ENCODE measurements at regions of chr1 and their contacts with region 1.

Region 1: DNA sequence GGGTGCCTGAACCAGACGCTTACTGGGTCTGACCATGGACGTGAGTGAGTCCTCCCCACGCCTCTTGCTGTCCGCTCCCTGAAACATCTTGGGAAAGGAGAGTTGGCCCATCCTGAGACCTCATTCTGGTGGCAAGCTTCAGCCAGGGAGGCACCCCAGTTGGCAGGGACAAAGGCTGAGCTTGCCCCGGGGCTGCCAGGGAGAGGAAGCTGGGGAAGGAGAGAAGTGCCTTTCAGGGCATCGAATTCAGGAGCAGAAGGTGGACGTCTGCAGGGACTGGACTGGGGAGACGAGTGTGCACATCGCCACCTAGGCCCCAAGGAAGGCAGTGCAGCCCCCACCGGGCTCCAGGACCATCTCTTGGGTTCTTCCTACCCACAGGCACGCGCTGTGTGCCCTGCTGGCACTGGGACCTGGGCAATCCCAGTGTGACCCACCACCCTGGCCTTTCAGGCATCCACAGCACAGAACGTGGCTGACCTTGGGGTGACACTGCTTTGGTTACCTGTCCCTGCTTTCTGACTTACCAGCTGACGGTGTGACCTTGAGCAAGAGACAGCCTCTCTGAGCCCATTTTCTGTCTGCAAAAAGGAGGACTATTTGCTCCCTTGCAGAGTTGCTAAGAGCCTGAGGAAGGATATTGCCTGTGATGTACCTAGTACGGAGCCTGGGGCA is 133.0 kb upstream of the WNT4 start:
- DNase-seq: peak; percentile 67
- ATAC-seq: peak; percentile 89
- H3K4me3 ChIP-seq: no peak overlapping the region
- H3K27ac ChIP-seq: peak overlapping the region; percentile 73
- H3K4me1 ChIP-seq: peaks cover 34% of the 10 kb centered on the region
- H3K27me3 ChIP-seq: no peaks in the 10 kb centered on the region
- CTCF ChIP-seq: peak; percentile 79

Region 2: DNA sequence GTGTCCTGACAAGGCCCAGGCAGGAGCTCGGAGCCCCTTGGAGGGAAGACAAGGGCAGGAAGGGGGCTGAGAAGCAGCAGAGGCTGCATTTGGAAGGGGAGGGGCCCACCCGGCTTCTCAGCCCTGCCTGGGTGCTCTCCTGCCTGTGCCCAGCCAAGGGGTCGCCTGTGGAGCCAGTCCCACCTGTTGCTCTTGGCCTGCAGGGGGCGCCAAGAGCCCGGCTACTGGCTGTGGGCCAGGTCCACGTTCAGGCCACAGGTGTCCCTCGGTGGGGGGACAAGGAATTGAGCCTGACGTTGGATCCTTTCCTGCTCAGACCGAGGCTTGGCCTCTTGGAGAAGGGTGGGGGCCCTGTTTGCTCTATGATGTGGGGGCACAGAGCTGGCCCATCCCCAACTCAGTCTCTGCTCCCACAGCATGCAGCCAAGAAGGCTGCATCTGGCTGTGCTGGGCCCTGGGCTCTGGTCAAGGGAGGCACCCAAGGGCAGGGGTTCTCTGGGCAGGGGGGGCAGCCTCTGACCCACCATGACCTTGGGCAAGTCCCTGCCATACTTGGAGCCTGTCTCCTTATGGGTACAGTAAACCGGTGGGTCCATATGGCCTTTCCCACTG is 143.9 kb before region 1 on chr1:
- CTCF ChIA-PET with region 1: no interaction called
- POLR2A ChIA-PET with region 1: no interaction called
- intact Hi-C with region 1: loop called (anchors 1 kb)
- DNase-seq: peak; percentile 63
- ATAC-seq: peak; percentile 68
- H3K4me3 ChIP-seq: no peak overlapping the region
- H3K27ac ChIP-seq: no peak overlapping the region
- H3K4me1 ChIP-seq: peaks cover 20% of the 10 kb centered on the region
- H3K27me3 ChIP-seq: no peaks in the 10 kb centered on the region
- CTCF ChIP-seq: peak; percentile 93

Region 3: GRCh38 chr1:22184892-22185612 is 90.8 kb before region 1 on chr1:
- CTCF ChIA-PET with region 1: interaction called, 15 read pairs
- POLR2A ChIA-PET with region 1: no interaction called
- intact Hi-C with region 1: no loop called
- DNase-seq: no peak
- ATAC-seq: no peak
- H3K4me3 ChIP-seq: no peak overlapping the region
- H3K27ac ChIP-seq: no peak overlapping the region
- H3K4me1 ChIP-seq: no peaks in the 10 kb centered on the region
- H3K27me3 ChIP-seq: peaks cover 8% of the 10 kb centered on the region; the same call in 1 of the 2 replicates
- CTCF ChIP-seq: no peak

Region 4: GRCh38 chr1:22208235-22208972 is 67.5 kb before region 1 on chr1:
- CTCF ChIA-PET with region 1: no interaction called
- POLR2A ChIA-PET with region 1: no interaction called
- intact Hi-C with region 1: no loop called
- DNase-seq: peak; percentile 30
- ATAC-seq: no peak
- H3K4me3 ChIP-seq: no peak overlapping the region
- H3K27ac ChIP-seq: no peak overlapping the region
- H3K4me1 ChIP-seq: peaks cover 3% of the 10 kb centered on the region; the same call in 1 of the 2 replicates
- H3K27me3 ChIP-seq: peaks cover 14% of the 10 kb centered on the region; the same call in 1 of the 2 replicates
- CTCF ChIP-seq: peak; percentile 75

Region 5: GRCh38 chr1:22229374-22229773 is 46.5 kb before region 1 on chr1:
- CTCF ChIA-PET with region 1: no interaction called
- POLR2A ChIA-PET with region 1: interaction called, 5 read pairs
- intact Hi-C with region 1: loop called (anchors 1 kb)
- DNase-seq: peak; percentile 87
- ATAC-seq: peak; percentile 61
- H3K4me3 ChIP-seq: no peak overlapping the region
- H3K27ac ChIP-seq: peak overlapping the region; percentile 97
- H3K4me1 ChIP-seq: peaks cover 27% of the 10 kb centered on the region
- H3K27me3 ChIP-seq: no peaks in the 10 kb centered on the region
- CTCF ChIP-seq: no peak

Region 6: GRCh38 chr1:22259551-22260282 is 16.1 kb before region 1 on chr1:
- CTCF ChIA-PET with region 1: no interaction called
- POLR2A ChIA-PET with region 1: no interaction called
- intact Hi-C with region 1: no loop called
- DNase-seq: peak; percentile 83
- ATAC-seq: peak; percentile 81
- H3K4me3 ChIP-seq: peak overlapping the region; percentile 8; the same call in 1 of the 2 replicates
- H3K27ac ChIP-seq: peak overlapping the region; percentile 74
- H3K4me1 ChIP-seq: peaks cover 38% of the 10 kb centered on the region
- H3K27me3 ChIP-seq: no peaks in the 10 kb centered on the region
- CTCF ChIP-seq: no peak

Region 7: DNA sequence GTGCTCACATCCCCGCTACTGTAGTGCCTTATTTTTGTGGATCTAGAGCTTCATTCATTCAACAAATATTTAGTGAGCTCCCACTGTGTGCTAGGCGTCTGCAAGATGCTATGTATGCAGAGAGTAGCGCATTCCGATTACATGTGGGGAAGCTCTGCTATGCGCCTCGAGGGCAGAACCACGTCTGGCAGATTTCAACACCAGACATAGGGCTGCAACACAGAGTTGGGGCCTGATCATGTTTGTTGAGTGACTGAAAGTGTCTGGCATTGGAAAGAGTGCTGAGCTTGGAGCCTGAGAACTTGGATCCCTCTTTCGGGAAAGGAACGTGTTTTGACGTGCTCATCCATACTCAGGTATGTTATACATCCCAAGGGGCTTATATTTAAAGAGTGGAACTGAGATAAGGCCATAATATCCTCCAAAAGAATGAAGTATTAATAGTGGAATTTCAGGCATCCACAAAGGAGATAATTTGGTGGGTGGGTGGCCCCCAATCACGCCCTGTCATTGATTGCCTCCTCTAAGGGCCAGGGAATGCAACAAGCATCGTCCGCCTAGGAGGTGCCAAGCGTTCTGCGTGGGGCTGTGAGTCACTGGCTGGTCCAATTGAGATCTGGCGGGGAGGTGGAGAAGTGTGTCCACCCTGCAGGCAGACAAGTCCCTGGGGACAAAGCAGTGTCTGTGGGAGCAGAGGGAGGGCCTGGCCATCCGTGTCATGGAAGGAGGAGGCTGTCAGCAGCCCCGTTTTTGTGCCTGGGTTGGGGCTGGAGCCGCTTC is 113.0 kb after region 1 on chr1:
- CTCF ChIA-PET with region 1: no interaction called
- POLR2A ChIA-PET with region 1: no interaction called
- intact Hi-C with region 1: no loop called
- DNase-seq: peak; percentile 22
- ATAC-seq: no peak
- H3K4me3 ChIP-seq: no peak overlapping the region
- H3K27ac ChIP-seq: no peak overlapping the region
- H3K4me1 ChIP-seq: no peaks in the 10 kb centered on the region; the same call in 1 of the 2 replicates
- H3K27me3 ChIP-seq: 0 out of 2 replicates have a peak, but pooled peaks cover 6% of the 10 kb centered on the region
- CTCF ChIP-seq: no peak

Region 8: DNA sequence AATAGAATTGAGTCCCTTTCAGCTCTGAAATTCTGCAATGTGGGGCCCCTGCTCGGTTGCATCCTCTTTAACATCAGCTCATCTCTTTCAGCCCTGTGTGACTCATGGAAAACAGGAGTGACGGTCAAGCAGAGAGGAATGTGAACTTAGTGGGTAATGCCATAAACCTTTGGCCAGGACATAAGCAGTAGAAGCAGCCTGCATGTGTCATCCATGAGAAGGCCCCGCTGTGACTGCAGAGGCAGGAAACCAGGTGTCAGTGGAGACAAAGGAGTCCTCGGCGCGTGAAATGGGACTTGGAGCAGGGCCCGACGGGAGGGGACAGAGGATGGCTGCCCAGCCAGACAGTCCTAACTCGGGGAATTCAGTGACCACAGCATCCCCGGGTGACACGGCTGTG is 413.6 kb after region 1 on chr1:
- CTCF ChIA-PET with region 1: no interaction called
- POLR2A ChIA-PET with region 1: no interaction called
- intact Hi-C with region 1: no loop called
- DNase-seq: peak; percentile 96
- ATAC-seq: peak; percentile 99
- H3K4me3 ChIP-seq: no peak overlapping the region
- H3K27ac ChIP-seq: peak overlapping the region; percentile 17
- H3K4me1 ChIP-seq: peaks cover 14% of the 10 kb centered on the region
- H3K27me3 ChIP-seq: no peaks in the 10 kb centered on the region
- CTCF ChIP-seq: no peak

Measured in PC-3 (cell line).